ENCODE measurements at regions of chr2 and their contacts with region 1.

Region 1: DNA sequence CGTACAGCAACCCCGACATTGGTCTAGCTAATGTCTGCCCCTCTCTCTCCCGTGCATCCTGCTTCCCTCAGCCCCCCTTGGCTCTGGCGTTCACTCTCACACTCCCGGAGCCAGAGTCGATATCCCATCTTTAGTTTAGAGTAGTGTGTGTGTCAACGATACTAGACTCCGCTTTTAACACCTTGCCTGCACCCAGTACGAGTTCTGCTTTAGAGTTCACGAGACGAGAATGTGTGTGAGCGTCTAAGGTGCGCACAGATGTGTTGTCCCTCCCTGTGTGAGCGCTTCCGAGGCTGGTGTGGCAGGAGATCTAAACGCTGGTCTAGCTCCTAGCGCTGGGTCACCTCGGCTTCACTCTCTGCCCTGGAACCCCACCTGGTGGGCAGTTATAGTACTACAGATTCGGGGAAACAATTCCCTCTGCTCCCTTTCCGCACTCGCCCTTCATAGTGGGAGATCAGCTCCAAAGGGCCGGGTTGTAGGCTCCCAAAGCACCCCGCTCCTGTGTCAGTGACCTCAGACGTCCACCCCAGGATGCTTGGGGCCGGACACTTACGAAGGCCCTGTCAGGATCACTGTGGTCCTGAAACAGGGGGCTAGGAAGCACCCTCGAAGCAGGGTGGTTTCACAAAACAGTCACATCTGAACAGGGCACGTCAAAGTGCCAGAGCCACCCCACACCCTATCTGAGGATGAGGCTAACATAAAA is 2.6 kb upstream of the CYP26B1 start:
- DNase-seq: peak in 9 of 10 donors; percentile 61 to 90 (median 77)
- H3K4me3 ChIP-seq: peak overlapping the region; percentile 11 to 73 (median 57)
- H3K27ac ChIP-seq: peak overlapping the region in 4 of 59 donors; percentile 2 to 32 (median 22)
- H3K27me3 ChIP-seq: peaks cover 0 to 46% (median 24%) of the 10 kb centered on the region in 45 donors
- CTCF ChIP-seq: peak; percentile 73 to 96 (median 91)

Region 2: DNA sequence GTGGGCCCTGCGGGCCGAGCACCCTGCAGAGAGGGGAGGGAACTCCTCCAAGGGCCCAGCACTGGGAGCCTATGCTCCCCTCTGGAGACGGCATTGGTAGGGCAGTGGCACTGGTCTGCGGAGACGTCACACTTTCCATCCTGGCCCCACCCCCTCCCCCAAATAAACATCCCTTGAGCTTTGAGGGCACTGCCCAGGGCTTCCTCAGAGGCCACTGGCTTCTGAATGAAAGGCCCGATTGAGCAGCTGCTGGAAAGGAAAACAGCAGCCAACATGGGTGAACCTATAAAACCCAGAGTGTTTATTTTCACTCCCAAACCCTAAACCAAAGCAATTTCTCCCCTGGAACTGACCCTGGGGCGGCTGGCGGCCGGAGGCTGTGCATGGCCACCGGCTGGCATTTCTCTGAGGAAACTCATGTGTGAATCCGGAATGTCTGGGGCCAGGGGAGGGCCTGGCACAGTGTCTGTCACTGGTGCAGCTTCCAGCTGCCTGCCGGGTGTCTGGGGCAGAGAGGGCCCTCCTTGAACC is 558.1 kb before region 1 on chr2:
- intact Hi-C with region 1: loop called in 1 of 2 experiments (anchors 5 kb)
- DNase-seq: peak in 9 of 10 donors; percentile 40 to 78 (median 68)
- H3K4me3 ChIP-seq: peak overlapping the region in 1 of 59 donors; percentile 22
- H3K27ac ChIP-seq: peak overlapping the region; percentile 53 to 99 (median 95)
- H3K27me3 ChIP-seq: no peaks in the 10 kb centered on the region
- CTCF ChIP-seq: peak in 2 of 56 donors; percentile 9 to 13

Region 3: DNA sequence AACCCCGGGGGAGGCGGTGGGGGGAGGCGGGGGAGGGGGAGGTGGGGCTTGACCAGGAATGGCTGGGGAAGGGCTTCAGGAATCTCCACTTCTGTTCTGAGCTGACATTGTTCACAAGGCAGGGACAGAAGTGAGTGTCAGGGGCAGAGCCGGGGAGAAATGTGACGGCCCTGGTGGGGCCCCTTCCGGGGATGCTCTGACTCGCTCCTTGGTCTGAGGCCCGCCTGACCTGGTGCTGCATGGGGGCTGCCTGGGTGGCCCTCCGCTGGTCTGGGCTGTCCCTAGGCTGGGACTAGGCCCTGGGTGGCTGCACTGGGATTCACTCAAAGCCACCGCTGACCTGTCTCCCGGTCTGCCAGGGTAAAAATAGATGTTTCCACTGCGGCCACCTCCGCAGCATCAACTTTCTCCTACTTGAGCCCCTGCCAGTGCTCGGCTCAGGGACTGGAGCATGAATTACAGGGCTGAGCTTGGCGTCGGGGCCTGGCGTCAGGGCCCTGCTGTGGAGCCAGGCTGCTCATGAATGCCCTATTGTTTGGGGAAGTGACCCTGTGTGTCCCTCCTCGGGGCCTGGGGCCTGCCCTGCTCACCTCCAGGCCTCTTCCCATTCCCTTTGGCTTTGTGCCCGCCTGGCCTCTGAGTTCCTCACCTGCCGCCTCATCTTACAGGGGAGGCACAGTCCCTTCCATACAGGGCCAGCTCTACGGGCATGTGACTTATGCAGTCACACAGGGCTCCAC is 449.5 kb before region 1 on chr2:
- intact Hi-C with region 1: loop called in 1 of 2 experiments (anchors 10 kb)
- DNase-seq: peak; percentile 24 to 80 (median 76)
- H3K4me3 ChIP-seq: peak overlapping the region in 1 of 59 donors; percentile 27
- H3K27ac ChIP-seq: peak overlapping the region in 52 of 59 donors; percentile 3 to 80 (median 56)
- H3K27me3 ChIP-seq: no peaks in the 10 kb centered on the region
- CTCF ChIP-seq: peak in 2 of 56 donors; percentile 16 to 23

Region 4: GRCh38 chr2:71923887-71924533 is 226.3 kb before region 1 on chr2:
- intact Hi-C with region 1: loop called (anchors 1 to 5 kb)
- DNase-seq: peak in 7 of 10 donors; percentile 40 to 75 (median 69)
- H3K4me3 ChIP-seq: no peak overlapping the region
- H3K27ac ChIP-seq: no peak overlapping the region
- H3K27me3 ChIP-seq: no peaks in the 10 kb centered on the region
- CTCF ChIP-seq: peak; percentile 73 to 95 (median 89)

Region 5: DNA sequence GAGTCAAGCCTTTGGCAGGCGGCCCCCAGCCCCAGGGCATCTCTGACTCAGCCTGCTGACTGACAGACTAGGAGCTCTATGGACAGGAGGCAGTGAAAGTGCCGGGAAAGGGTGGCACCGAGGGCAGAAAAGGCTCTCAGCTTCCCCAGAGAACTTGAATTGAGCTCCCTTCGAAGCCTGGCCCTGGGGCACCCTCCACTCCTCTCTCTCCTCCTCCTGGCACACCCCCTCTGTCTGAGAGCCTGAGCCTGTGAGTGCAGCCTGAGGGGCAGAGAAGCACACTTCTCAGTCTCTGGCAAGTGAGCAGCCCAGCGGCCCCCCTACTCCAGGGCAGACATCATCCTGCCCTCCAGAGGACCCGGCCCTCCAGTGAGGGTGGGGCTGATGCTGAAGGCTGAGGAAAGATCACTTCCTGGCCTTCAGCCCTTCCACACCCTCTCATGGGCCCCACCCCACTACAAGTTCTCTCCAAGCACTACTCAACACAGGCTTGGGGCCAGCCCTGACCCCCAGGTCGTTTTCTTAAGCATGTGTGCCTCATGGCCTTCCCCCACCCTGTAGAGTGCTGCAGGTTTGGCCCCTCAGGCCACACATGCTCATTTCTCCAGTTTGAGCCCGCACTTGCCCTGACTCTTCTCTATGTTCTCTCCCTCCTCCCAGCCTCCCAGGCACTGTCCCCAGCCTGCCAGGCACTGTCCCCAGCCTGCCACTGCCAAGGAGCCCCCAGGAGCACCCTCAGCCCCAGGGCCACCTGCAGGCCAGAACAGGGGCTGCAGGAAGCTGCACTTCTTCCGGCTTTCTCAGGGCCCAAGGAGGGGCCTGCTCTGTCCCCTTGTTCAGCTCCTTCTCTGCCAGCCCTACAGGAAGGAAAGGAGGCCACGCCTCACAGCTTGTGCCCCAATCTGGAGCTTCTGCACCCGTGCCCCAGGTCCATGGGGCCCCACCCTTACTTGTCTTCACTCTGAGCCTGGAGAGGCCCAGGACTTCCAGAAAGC is 34.5 kb before region 1 on chr2:
- intact Hi-C with region 1: no loop called
- DNase-seq: peak in 1 of 10 donors; percentile 48
- H3K4me3 ChIP-seq: no peak overlapping the region
- H3K27ac ChIP-seq: no peak overlapping the region
- H3K27me3 ChIP-seq: peaks cover 0 to 14% (median 0%) of the 10 kb centered on the region in 45 donors
- CTCF ChIP-seq: no peak

Region 6: DNA sequence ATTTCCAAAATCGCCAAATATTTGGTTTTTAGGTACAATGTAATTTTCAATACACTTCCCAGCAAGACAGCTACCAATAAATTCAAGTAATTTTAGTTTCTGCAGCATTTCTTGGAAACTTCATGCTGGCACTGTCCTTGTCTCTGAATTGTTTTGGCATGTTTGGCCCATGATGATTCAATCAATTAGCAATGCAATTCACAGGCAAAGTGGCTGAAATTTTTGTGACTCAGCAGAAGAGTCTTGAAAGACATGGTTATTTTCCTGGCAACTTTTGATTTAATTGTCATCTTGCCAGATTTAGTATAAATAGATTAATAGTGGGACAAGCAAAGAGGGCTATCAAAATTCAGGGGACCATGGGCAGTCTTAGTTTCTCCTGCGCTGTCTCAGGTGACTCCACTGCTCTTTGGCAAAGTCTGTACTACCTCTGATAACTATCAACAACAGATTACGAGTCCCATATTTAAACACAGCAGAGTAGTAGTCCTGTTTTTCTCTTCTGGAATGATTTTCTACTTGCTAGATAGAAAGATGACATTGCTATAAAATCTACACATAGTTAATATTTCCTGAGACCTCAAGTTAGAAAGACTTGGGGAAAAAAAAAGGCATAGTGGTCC is 86.2 kb after region 1 on chr2:
- intact Hi-C with region 1: no loop called
- DNase-seq: no peak
- H3K4me3 ChIP-seq: no peak overlapping the region
- H3K27ac ChIP-seq: no peak overlapping the region
- H3K27me3 ChIP-seq: no peaks in the 10 kb centered on the region
- CTCF ChIP-seq: no peak

Region 7: DNA sequence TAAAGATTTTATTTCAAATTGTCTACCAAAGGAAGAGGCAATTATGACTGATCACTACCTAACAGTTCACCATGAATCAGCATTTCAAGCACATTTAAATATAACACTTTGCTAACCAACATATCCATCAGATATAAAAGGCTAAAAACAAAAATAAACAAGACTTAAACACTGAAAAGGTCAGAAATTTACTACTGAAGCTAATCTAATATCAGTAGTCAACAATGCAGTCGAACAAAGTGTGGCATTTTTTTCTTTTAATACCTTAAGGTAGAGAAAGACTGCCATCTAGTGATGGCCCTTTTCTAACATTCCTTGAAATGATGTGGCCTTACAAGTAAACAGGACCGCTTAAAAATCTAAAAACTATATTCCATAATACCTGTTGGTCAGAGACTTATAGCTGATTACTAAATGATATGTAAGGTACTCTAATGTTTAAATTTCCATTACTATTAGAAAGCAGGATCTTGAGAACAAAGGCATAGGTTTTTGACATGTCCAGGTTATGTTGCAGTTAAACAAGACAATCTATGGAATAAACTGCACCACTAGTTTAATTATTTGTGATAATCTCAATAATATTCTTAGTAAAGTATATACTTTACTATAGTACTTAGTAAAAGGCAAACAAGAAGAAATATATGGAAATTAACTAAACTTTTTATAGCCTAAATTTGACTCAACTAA is 595.5 kb after region 1 on chr2:
- intact Hi-C with region 1: loop called in 1 of 2 experiments (anchors 10 kb)
- DNase-seq: no peak
- H3K4me3 ChIP-seq: no peak overlapping the region
- H3K27ac ChIP-seq: peak overlapping the region in 2 of 59 donors; percentile 11 to 12
- H3K27me3 ChIP-seq: no peaks in the 10 kb centered on the region
- CTCF ChIP-seq: peak; percentile 58 to 94 (median 78)

Measured in dorsolateral prefrontal cortex (tissue), 120 donors.